Body of pancreas (tissue), 4 donors: ENCODE measurements at regions of chr16 and their contacts with region 1.

Region 1: DNA sequence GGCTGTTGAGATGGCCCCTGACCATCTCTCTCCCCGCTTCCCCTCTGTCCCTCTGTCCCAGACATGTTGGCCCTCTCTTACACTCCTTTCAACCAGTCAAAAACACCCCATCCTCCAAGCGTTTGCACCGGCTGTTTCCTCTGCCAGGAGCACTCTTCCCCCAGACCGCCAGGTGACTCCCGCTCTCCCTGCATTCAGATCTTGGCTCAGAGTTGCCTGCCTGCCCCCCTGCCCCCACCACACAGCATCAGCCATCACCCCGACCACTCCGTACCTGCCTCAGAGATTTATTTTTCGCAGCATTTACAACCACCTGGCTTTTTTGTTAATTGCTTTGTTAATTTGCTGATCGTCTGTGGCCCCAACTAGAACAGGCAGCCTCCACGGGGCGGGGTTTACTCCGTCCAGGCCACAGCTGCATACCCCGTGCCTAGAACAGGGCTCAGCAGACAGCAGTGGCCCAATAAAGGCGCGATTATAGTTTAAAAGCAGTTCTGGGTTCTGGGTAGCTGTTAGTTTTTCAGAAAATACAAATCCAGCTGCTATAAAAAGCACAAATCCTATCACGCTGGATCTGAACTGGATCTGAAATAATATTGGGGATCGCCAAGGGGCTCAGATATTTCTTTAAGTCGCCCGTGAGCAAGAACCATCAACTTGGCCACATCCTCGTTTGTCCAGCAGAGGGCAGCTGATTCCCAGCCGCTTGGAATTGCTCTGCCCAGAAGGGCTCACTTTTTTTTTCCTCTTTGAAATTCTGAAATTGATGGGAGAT is 173.6 kb downstream of the IRF8 start:
- DNase-seq: peak; percentile 67 to 76 (median 73)
- ATAC-seq: peak; percentile 58
- H3K4me3 ChIP-seq: no peak overlapping the region
- H3K27ac ChIP-seq: no peak overlapping the region
- H3K4me1 ChIP-seq: no peaks in the 10 kb centered on the region
- H3K27me3 ChIP-seq: no peaks in the 10 kb centered on the region
- CTCF ChIP-seq: peak; percentile 63 to 83 (median 77)
- POLR2A ChIP-seq: no peak

Region 2: DNA sequence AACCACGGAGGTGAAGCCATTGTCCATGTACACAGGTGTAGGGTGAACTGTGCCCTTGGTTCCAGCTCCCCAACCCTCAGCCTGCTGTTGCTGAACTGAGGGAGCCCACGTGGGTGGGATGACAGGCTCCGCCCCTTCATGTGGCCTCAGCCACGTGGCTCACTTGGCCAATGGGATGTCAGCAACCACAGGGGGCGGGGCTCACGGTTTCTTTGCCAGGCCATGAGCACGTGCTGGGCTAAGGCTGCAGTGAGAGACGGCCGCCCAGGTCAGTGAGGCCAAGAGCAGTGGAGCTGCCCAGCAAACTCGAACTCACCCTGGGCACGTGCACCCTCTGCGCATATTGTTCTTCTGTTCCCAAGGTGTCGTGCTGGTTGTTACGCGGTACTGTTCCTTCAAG is 109.0 kb after region 1 on chr16:
- intact Hi-C with region 1: no loop called
- DNase-seq: no peak
- ATAC-seq: no peak
- H3K4me3 ChIP-seq: no peak overlapping the region
- H3K27ac ChIP-seq: no peak overlapping the region
- H3K4me1 ChIP-seq: no peaks in the 10 kb centered on the region
- H3K27me3 ChIP-seq: no peaks in the 10 kb centered on the region
- CTCF ChIP-seq: no peak
- POLR2A ChIP-seq: no peak

Region 3: GRCh38 chr16:86322806-86323205 is 250.3 kb after region 1 on chr16:
- intact Hi-C with region 1: no loop called
- DNase-seq: no peak
- ATAC-seq: no peak
- H3K4me3 ChIP-seq: no peak overlapping the region
- H3K27ac ChIP-seq: no peak overlapping the region
- H3K4me1 ChIP-seq: no peaks in the 10 kb centered on the region
- H3K27me3 ChIP-seq: no peaks in the 10 kb centered on the region
- CTCF ChIP-seq: no peak
- POLR2A ChIP-seq: no peak

Region 4: GRCh38 chr16:86424398-86425367 is 352.2 kb after region 1 on chr16:
- intact Hi-C with region 1: no loop called
- DNase-seq: no peak
- ATAC-seq: no peak
- H3K4me3 ChIP-seq: no peak overlapping the region
- H3K27ac ChIP-seq: no peak overlapping the region
- H3K4me1 ChIP-seq: no peaks in the 10 kb centered on the region
- H3K27me3 ChIP-seq: no peaks in the 10 kb centered on the region
- CTCF ChIP-seq: no peak
- POLR2A ChIP-seq: no peak

Region 5: GRCh38 chr16:86519649-86520316 is 447.3 kb after region 1 on chr16:
- intact Hi-C with region 1: loop called (anchors 5 kb)
- DNase-seq: peak; percentile 49 to 69 (median 60)
- ATAC-seq: peak; percentile 18
- H3K4me3 ChIP-seq: no peak overlapping the region
- H3K27ac ChIP-seq: no peak overlapping the region
- H3K4me1 ChIP-seq: peaks cover 4% of the 10 kb centered on the region
- H3K27me3 ChIP-seq: no peaks in the 10 kb centered on the region
- CTCF ChIP-seq: peak; percentile 65 to 88 (median 79)
- POLR2A ChIP-seq: no peak